Activated naive CD4-positive, alpha-beta T cell treated with anti-CD3 and anti-CD28 coated beads for 36 hours (primary cell): ENCODE measurements at regions of chr17 and their contacts with region 1.

Region 1: DNA sequence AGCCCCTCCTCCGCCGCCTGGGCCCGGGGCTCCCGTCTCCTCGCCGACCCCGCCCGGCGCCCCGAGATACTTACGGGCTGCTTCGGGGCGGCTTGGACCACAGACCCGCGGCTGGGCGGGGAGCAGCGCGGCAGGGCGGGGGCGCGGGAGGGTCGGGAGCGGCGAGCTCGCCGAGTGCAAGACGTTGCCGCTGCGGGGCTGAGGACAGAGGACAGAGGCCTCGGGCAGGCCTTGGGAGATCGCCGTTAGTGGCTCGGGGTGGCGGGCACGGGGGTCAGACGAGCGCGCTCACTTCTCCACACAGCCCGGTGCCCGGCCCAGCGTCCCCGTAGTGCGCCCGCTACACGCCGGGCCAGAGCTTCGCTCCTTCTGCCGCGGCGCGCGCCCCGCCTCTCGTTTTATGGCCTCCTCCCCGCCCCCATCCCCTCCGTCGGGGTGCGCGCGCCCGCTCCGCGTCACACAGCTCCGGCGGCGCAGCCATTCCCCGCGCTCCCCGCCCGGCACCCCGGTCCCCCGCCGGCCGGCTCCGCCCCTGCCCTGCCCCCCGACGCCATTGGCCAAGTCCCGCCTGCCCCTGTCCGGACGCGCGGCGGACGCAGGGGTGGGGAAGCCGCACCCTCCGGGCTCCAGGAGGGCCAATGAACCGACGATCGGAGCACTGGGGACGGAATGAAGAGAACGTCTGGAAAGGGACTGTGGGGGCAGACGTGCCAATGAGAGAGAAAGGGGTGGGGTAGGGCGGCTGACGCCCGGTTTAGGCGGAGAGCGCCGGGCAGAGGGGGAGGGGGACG is at the start of gene TOB1:
- DNase-seq: peak; percentile 97
- H3K4me3 Mint-ChIP-seq: peak within 1 kb of the TSS; percentile 97
- H3K27ac Mint-ChIP-seq: peak within 1 kb of the TSS; percentile 96
- H3K4me1 Mint-ChIP-seq: peaks cover 45% of the 10 kb centered on the region
- H3K27me3 Mint-ChIP-seq: no peaks in the 10 kb centered on the region
- total RNA-seq, gene TOB1: 40.7 to 44.7 TPM

Region 2: DNA sequence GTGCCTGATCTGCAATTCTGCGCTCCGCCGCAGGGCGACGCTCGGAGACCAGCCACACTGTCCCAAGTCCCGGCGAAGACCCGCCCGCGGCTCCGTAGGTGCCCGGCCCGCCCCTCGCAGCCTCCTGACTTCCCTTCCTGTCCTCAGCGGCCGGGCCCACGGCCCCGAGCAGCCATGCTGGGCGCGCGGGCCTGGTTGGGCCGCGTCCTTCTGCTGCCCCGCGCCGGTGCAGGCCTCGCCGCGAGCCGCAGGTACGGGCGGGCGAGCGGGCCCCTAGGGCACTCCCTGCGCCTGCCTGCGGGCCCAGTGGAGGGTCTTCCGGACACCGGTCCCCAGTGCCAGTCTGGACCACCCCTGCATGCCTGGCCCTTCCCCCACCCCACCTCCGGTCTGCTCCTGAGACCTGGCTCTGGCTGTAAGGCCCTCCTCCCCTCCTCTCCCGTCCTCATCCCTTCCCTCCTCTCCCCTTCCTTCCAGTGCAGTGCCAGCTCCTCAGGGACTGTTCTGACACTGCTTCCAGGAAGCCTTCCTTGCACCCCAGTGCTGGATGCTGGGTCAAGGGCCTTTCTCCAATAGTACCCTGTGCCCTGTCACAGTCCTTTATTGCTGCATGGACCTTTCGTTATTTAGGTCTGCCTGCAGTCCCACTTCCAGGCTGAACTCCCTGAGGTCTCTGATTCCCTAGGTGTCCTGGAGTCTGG is 319.0 kb before region 1 on chr17 and contains the start of gene SPATA20:
- CTCF ChIA-PET with region 1: no interaction called
- intact Hi-C with region 1: no loop called
- DNase-seq: peak; percentile 92
- H3K4me3 Mint-ChIP-seq: peak within 1 kb of the TSS; percentile 74
- H3K27ac Mint-ChIP-seq: peak within 1 kb of the TSS; percentile 67
- H3K4me1 Mint-ChIP-seq: peaks cover 9% of the 10 kb centered on the region
- H3K27me3 Mint-ChIP-seq: peaks cover 2% of the 10 kb centered on the region
- total RNA-seq, gene SPATA20: 15.8 to 16.1 TPM

Region 3: GRCh38 chr17:50719144-50719923 is 146.8 kb before region 1 on chr17 and contains the start of gene LUC7L3:
- CTCF ChIA-PET with region 1: no interaction called
- intact Hi-C with region 1: loop called (anchors 1 kb)
- DNase-seq: peak; percentile 95
- H3K4me3 Mint-ChIP-seq: peak within 1 kb of the TSS; percentile 97
- H3K27ac Mint-ChIP-seq: peak within 1 kb of the TSS; percentile 98
- H3K4me1 Mint-ChIP-seq: peaks cover 25% of the 10 kb centered on the region
- H3K27me3 Mint-ChIP-seq: no peaks in the 10 kb centered on the region
- total RNA-seq, gene LUC7L3: 120 to 136 TPM

Region 4: GRCh38 chr17:50904521-50905459 is 38.6 kb after region 1 on chr17:
- CTCF ChIA-PET with region 1: interaction called, 5 read pairs
- intact Hi-C with region 1: loop called (anchors 1 kb)
- DNase-seq: no peak
- H3K4me3 Mint-ChIP-seq: no peak overlapping the region
- H3K27ac Mint-ChIP-seq: no peak overlapping the region
- H3K4me1 Mint-ChIP-seq: peaks cover 60% of the 10 kb centered on the region
- H3K27me3 Mint-ChIP-seq: no peaks in the 10 kb centered on the region

Region 5: GRCh38 chr17:50931144-50931908 is 65.1 kb after region 1 on chr17:
- CTCF ChIA-PET with region 1: interaction called, 3 read pairs
- intact Hi-C with region 1: loop called (anchors 1 kb)
- DNase-seq: peak; percentile 48
- H3K4me3 Mint-ChIP-seq: peak overlapping the region; percentile 75
- H3K27ac Mint-ChIP-seq: peak overlapping the region; percentile 78
- H3K4me1 Mint-ChIP-seq: peaks cover 23% of the 10 kb centered on the region
- H3K27me3 Mint-ChIP-seq: no peaks in the 10 kb centered on the region

Region 6: GRCh38 chr17:51120739-51121617 is 254.8 kb after region 1 on chr17 and contains the start of gene SPAG9:
- CTCF ChIA-PET with region 1: no interaction called
- intact Hi-C with region 1: loop called (anchors 1 kb)
- DNase-seq: peak; percentile 92
- H3K4me3 Mint-ChIP-seq: peak within 1 kb of the TSS; percentile 98
- H3K27ac Mint-ChIP-seq: peak within 1 kb of the TSS; percentile 99
- H3K4me1 Mint-ChIP-seq: peaks cover 49% of the 10 kb centered on the region
- H3K27me3 Mint-ChIP-seq: no peaks in the 10 kb centered on the region
- total RNA-seq, gene SPAG9: 39.8 to 43.2 TPM

Region 7: GRCh38 chr17:51260125-51260880 is 394.1 kb after region 1 on chr17 and contains the start of gene UTP18:
- CTCF ChIA-PET with region 1: no interaction called
- intact Hi-C with region 1: loop called (anchors 1 kb)
- DNase-seq: peak; percentile 96
- H3K4me3 Mint-ChIP-seq: peak within 1 kb of the TSS; percentile 88
- H3K27ac Mint-ChIP-seq: peak within 1 kb of the TSS; percentile 98
- H3K4me1 Mint-ChIP-seq: peaks cover 66% of the 10 kb centered on the region
- H3K27me3 Mint-ChIP-seq: no peaks in the 10 kb centered on the region
- total RNA-seq, gene UTP18: 54.4 to 54.5 TPM